ENCODE measurements at regions of chr20 and their contacts with region 1.

Region 1: GRCh38 chr20:18276821-18277220 is 11.5 kb upstream of the ZNF133 start:
- DNase-seq: peak; percentile 70 to 87
- H3K4me3 ChIP-seq: no peak overlapping the region
- H3K27ac ChIP-seq: no peak overlapping the region
- H3K4me1 ChIP-seq: peaks cover 15% of the 10 kb centered on the region
- H3K27me3 ChIP-seq: no peaks in the 10 kb centered on the region
- CTCF ChIP-seq: peak; percentile 96

Region 2: DNA sequence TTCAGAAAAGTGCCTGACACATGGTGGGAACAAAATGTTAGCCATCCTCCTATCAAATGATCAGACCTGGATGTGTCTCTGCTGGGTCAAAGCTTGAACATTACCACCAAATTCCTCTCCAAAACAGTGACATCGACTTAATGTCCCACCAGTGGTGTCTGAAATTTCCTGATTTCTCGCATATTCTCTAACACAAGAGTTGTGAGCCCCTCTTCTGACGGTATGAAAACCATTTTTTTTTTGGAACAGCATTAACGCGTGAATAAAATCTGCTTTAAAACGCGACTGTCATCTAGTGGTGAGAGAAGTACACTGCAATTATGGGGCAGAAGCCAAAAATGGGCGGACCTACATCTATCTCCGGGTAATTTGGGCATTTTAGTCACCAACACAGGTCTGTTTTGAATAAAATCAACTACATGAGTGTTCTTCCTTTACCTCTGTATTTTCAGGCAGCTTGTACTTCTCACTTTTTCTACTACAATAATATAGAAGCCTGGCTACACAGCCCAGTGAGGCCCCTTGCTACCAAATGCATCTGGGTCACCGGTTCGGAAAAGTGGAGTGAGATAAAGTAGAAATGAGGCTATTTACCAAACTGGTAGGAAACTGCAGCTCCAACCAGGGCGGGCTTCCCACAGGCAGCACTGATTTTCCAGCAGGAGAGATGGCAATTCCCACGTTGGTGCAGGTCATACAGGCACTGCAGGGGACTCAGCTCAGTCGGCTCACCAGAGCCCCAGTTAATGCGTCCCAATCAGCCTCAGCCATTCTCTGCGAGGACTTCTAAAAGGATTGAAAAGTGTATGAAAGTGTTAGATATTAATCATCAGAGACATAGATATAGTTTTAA is 280.6 kb before region 1 on chr20:
- CTCF ChIA-PET with region 1: no interaction called
- POLR2A ChIA-PET with region 1: no interaction called
- intact Hi-C with region 1: loop called (anchors 2 kb)
- DNase-seq: peak in 1 of 2 experiments; percentile 41
- H3K4me3 ChIP-seq: no peak overlapping the region
- H3K27ac ChIP-seq: no peak overlapping the region
- H3K4me1 ChIP-seq: peaks cover 5% of the 10 kb centered on the region
- H3K27me3 ChIP-seq: no peaks in the 10 kb centered on the region
- CTCF ChIP-seq: peak; percentile 88

Region 3: DNA sequence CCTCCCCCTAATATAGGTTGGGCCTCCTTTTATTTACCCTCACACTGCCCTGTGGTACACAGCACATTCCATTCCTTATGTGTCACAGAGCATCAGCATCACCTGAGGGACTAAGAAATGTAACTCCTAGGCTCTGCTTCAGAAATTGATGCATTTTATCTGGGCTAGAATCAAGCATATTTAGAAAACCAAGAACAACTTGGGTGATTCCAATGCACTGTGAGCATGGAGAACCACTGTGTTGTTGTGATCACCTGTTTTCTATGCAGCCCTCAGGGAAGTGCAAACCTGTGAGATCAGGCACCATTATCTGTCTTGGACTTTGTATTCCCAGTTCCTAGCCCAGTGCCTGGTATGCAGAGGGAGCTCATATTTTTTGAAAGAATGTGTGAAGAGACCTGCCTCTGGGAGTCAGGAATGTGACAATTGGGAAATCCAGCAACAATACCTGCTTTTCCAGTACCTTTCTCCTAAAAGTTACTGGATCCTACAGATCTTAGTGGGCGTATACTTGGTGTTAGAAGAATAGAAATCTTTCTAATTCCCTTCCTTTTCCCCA is 132.2 kb before region 1 on chr20:
- CTCF ChIA-PET with region 1: interaction called, 3 read pairs
- POLR2A ChIA-PET with region 1: no interaction called
- intact Hi-C with region 1: loop called (anchors 2 kb)
- DNase-seq: peak; percentile 64 to 94
- H3K4me3 ChIP-seq: peak overlapping the region; percentile 55; the same call in 1 of the 2 replicates
- H3K27ac ChIP-seq: peak overlapping the region; percentile 93
- H3K4me1 ChIP-seq: peaks cover 62% of the 10 kb centered on the region
- H3K27me3 ChIP-seq: no peaks in the 10 kb centered on the region
- CTCF ChIP-seq: no peak

Region 4: DNA sequence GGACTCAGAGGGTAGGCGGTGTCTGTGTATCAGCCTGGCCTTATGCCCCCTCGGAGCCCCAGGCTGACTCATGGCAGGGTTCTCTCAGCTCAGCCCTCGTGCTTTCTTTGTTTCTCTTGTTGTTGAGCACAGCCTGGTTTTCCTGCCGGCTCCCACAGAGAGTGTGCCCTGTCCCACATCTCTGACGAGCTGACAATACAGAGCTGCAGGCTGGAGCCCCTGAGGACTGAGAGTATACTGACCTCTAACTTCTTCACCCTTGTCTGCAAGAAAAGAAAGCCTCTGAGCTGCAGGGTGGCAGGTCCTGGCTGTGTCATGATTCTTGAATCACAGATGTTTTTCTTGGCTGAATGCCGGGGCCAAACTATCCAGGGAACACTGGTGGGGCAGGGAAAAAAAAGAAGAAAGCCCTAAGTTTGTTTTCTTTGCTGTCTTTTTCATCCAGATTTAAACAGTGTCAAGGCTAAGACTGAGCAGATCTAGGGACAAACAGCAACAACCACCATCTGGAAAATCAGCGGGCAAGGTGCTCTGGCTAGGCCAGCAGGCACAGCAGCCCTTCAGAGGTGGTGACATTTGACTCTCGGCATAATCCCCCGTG is 51.8 kb before region 1 on chr20:
- CTCF ChIA-PET with region 1: no interaction called
- POLR2A ChIA-PET with region 1: no interaction called
- intact Hi-C with region 1: loop called (anchors 1 kb)
- DNase-seq: peak; percentile 68 to 77
- H3K4me3 ChIP-seq: peak overlapping the region; percentile 33; the same call in 1 of the 2 replicates
- H3K27ac ChIP-seq: peak overlapping the region; percentile 49
- H3K4me1 ChIP-seq: peaks cover 37% of the 10 kb centered on the region
- H3K27me3 ChIP-seq: no peaks in the 10 kb centered on the region
- CTCF ChIP-seq: no peak

Measured in PC-9 (cell line).